Activated naive CD4-positive, alpha-beta T cell treated with anti-CD3 and anti-CD28 coated beads for 36 hours (primary cell): ENCODE measurements at regions of chr15 and their contacts with region 1.

Region 1: DNA sequence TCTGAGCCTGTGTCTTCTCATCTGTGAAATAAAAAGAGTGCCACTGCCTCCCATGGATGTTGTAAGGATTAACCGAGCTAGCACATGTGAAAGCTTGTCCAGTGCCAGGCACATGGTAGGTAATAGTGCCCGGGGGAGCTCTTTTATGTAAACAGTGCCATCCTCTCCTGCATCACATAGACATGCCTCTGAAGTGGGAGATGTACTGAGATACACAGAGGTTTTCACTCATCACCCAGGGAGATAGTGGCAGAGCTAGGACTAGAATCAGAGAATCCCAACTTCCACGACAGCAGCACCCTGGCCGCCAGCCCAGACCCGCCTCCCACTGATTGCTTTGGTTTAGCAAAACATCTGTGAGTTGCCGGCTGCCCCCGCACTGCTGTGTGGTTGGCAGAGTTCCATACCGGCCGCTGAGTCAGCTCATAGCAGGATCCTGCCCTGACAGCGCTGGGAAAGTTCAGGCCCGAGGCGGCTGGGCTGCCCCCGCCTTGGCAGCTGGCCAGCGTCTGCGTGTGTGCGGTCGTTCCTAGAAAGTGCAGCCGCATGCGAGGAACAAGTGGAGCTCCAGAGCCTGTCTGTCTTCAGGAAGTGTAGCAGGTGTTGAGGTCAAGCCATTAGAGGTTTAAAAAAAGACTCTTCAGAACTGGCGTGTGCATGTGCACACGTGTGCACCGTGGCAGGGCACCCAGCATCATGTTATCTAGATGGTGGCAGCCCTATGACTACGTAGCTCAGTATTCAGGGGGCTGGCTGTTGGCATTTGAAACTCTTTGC is 5.0 kb downstream of the ARID3B start:
- DNase-seq: peak; percentile 98
- H3K4me3 Mint-ChIP-seq: peak overlapping the region; percentile 46
- H3K27ac Mint-ChIP-seq: no peak overlapping the region
- H3K4me1 Mint-ChIP-seq: peaks cover 69% of the 10 kb centered on the region
- H3K27me3 Mint-ChIP-seq: no peaks in the 10 kb centered on the region

Region 2: GRCh38 chr15:75023181-75023871 is 477.3 kb after region 1 on chr15 and contains the start of gene PPCDC:
- CTCF ChIA-PET with region 1: no interaction called
- intact Hi-C with region 1: loop called (anchors 5 kb)
- DNase-seq: peak; percentile 98
- H3K4me3 Mint-ChIP-seq: peak within 1 kb of the TSS; percentile 90
- H3K27ac Mint-ChIP-seq: peak within 1 kb of the TSS; percentile 90
- H3K4me1 Mint-ChIP-seq: peaks cover 16% of the 10 kb centered on the region
- H3K27me3 Mint-ChIP-seq: no peaks in the 10 kb centered on the region
- total RNA-seq, gene PPCDC: 17.5 to 18.0 TPM